Common myeloid progenitor, CD34-positive (primary cell): ENCODE measurements at regions of chr14 and their contacts with region 1.

Region 1: DNA sequence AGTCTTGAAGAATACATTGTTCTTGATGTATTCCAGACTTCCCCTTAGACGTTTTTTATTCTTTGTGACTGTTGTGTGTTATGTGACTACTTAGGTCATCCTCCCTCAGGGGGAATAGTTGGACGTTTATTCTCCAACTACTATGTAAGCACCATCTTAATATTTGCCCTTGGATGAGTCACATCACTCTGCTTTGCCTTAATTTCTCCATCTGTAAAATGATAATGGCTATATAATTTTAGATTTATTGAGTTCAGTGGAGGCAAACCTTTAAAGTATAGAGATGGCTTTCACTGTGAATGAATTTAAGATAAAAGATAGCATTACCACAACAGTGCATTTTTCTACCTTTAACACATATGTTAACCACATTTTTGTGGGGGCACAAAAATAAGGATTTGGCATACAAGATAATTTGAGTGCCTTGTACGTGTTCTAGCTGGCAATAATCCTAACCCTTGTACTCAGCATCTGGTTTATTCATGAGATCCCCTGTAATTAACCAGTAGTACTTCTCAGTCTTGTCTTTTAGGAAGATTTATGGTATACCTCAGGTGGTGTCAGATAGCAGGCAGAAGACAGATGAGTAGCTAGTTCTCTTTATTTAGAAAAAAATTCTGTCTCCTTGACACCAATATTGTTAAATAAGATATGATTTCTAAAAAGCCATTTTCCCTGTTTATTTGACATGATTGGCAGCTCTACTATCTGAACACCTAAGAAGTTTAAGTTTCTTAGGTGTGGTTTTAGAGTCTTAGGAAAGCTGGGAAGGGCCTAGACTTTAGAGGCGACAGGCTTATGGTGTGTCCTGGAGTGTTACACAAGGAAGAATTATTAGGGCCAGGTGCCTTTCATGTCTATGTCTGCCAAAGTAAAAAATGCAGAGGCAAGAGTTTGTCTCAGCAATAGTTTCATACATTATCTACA is 152.3 kb downstream of the RAD51B start:
- DNase-seq: peak in 1 of 3 donors; percentile 59
- H3K4me3 ChIP-seq: no peak overlapping the region
- H3K27ac ChIP-seq: no peak overlapping the region
- H3K4me1 ChIP-seq: peaks cover 2 to 14% (median 7%) of the 10 kb centered on the region in 4 experiments
- H3K27me3 ChIP-seq: no peaks in the 10 kb centered on the region

Region 2: DNA sequence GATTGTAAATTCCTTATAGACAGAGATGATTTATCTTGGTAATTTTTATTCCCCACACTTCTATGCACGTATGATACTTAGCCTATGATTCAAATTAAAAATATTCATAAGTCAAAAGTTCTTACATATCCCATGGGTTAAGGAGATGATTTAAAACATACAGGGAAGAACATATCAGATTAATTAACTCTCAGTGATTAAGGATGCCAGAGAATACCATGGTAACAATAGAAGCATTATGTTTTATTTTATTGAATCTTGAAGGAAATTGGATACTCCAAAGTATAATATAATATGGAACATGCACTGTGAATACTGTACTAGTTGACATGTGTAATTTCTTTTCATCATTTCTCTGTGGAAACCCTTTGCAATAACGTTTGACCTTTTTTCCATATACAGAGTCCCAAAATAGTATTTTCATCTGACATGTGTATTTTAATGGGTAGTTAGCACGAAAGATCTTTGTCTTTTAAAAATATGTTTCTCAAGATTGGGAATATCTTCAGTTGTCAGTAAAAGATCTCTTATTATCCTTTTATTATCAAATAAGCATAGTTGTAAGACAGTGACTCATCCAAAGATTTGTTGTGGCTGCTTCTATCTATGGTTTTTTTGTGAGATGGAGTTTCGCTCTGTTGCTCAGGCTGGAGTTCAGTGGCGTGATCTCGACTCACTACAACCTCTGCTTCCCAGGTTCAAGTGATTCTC is 14.4 kb after region 1 on chr14:
- CTCF ChIA-PET with region 1: interaction called, 11 read pairs
- POLR2A ChIA-PET with region 1: no interaction called
- DNase-seq: peak in 2 of 3 donors; percentile 26 to 61
- H3K4me3 ChIP-seq: no peak overlapping the region
- H3K27ac ChIP-seq: peak overlapping the region in 1 of 2 experiments; percentile 81
- H3K4me1 ChIP-seq: peaks cover 0 to 36% (median 16%) of the 10 kb centered on the region in 4 experiments
- H3K27me3 ChIP-seq: no peaks in the 10 kb centered on the region